ENCODE measurements at regions of chr4 and their contacts with region 1.

Region 1: DNA sequence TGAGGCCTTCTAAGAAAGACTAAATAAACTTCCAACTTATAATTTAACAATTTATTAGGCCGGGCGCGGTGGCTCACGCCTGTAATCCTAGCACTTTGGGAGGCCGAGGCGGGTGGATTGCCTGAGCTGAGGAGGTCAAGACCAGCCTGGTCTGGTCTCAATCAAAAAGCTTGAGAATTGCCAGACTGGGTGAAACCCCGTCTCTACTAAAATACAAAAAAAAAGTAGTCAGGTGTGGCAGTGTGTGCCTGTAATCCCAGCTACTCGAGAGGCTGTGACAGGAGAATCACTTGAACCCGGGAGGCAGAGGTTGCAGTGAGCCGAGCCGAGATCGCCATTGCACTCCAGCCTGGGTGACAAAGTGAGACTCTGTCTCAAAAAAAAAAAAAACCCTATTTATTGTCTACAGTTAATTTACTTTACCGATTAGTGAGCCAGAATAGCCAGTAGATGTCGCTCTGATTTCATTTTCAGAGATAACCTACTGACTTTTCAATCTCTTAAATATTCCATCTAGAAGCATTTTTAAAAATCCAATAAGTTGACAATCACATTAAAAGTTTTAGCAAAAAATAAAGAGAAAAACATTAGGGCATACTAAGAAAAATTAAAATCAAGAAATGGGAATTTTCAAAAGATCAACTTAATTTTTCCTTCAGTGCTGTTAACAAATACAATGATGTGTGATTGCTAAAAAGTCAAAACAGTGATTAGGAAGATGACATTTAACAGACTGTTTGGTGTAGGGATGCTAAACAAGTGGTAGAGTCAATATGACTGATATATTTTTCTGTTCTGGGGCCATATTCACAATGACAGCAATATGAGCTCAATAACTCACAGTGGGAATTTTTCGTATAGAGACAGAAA is 4.3 kb upstream of the SHROOM3 start:
- DNase-seq: peak; percentile 12
- H3K4me3 ChIP-seq: no peak overlapping the region
- H3K27me3 ChIP-seq: peaks cover under 1% of the 10 kb centered on the region; the same call in 1 of the 2 replicates
- CTCF ChIP-seq: peak; percentile 56

Region 2: DNA sequence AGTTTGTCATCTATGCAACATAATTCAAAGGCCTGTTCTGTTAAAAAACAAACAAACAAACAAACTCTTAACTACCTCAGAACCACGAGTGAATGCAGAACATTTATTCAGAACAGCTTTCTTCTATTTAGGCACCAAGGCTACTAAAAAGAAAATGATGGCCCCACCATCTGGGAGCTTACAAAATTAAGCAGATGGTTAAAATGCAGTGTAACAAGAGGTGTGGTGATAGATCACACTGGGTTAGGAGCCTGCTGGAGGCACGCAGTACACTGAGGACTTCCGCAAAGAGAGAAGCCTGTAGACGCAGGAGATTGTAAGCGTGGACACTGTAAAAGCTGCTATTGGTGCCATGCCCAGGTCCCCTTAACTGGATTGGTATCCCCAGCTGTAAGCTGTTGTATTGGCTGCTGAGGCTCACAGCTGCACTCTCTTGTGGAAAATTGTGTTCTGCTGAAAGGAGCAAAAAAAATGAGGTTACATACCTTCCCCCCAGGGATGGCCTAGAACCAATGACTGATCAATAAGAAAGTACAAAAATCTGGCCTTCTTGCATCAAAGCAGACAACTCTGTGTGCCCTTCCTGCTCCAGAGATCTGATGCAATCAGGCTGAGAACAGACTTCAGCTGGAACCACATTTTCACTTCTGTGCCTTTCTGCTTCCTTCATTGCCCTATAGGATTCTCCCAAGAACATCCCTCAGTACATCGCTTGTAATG is 64.3 kb after region 1 on chr4:
- CTCF ChIA-PET with region 1: interaction called, 16 read pairs
- POLR2A ChIA-PET with region 1: no interaction called
- DNase-seq: no peak
- H3K4me3 ChIP-seq: no peak overlapping the region
- H3K27me3 ChIP-seq: peaks cover 5% of the 10 kb centered on the region
- CTCF ChIP-seq: no peak

Region 3: GRCh38 chr4:76504613-76505465 is 74.1 kb after region 1 on chr4:
- CTCF ChIA-PET with region 1: interaction called, 77 read pairs
- POLR2A ChIA-PET with region 1: no interaction called
- DNase-seq: no peak
- H3K4me3 ChIP-seq: no peak overlapping the region
- H3K27me3 ChIP-seq: 0 out of 2 replicates have a peak, but pooled peaks cover 2% of the 10 kb centered on the region
- CTCF ChIP-seq: peak; percentile 65

Region 4: GRCh38 chr4:76969941-76970529 is 539.3 kb after region 1 on chr4:
- CTCF ChIA-PET with region 1: no interaction called
- POLR2A ChIA-PET with region 1: interaction called, 10 read pairs
- DNase-seq: no peak
- H3K4me3 ChIP-seq: no peak overlapping the region
- H3K27me3 ChIP-seq: no peaks in the 10 kb centered on the region
- CTCF ChIP-seq: no peak